SK-N-SH (cell line): ENCODE measurements at regions of chr10 and their contacts with region 1.

Region 1: DNA sequence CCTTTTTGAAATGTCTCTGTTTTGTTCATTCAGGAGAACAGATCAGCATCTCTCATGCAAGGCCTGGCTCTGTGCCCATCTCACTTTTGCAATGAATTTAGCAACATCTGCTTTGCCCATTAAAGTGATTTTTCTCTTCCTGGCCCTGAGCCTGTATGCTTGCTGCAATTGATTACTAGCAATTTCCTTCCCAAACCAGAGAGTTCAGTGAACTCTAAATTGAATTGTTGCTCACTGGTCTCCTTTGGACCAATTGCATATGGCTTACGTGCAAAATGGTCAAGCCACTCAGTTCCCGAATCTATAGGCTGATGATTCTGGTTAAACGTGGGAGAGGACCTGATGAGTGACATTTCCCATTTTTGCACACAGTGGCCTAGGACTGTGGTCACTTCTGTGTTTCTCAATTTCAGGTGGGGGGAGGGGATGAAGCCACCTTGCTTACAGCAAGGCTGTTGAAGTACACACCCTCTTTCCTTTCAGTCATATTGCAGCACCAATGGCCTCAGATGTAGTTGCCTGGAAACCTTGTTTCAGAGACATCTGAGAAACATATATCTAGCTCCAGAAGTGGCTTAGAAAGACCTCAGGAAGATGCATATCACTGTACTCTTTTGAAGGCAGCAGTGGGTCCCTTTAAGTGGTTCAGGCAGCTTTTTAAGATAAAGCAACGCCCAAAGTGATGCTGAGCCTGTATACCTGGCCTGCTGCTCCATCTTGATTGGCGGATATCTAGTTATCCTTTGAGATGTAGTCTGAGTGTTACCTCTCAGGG is 201.4 kb downstream of the PTEN start:
- DNase-seq: peak; percentile 60
- H3K4me3 ChIP-seq: no peak overlapping the region; a peak in 1 of 4 replicates
- H3K27ac ChIP-seq: peak overlapping the region in 1 of 2 experiments; percentile 98; a peak in 2 of 4 replicates
- H3K4me1 ChIP-seq: peaks cover 6 to 43% of the 10 kb centered on the region in 2 experiments; a peak in 3 of 4 replicates
- H3K27me3 ChIP-seq: no peaks in the 10 kb centered on the region
- CTCF ChIP-seq: no peak
- EP300 ChIP-seq: peak; percentile 18 to 99; a peak in 3 of 4 replicates
- RAD21 ChIP-seq: no peak; the same call in 1 of the 2 replicates

Region 2: DNA sequence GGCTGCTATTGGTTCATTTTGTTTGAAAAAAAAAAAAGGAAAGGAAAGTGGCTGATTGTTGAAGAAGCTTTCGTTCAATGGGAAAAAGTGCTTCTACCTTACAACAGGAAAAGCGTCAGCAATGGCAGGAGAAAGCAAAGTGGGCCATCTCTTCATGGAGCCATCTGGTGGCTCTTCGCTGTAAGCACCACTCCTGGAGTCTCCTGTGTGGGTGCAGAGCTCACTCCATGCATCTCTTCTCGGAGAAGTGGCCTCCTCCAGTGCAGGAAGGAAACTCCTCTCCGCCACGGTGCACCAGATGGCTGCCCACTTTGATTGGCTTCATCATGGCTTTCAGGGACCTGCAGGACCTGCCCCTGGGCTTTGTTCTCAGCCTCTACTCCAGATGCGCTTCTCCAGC is 49.6 kb after region 1 on chr10:
- CTCF ChIA-PET with region 1: interaction called, 11 read pairs
- POLR2A ChIA-PET with region 1: no interaction called
- DNase-seq: peak; percentile 36
- H3K4me3 ChIP-seq: no peak overlapping the region
- H3K27ac ChIP-seq: no peak overlapping the region
- H3K4me1 ChIP-seq: peaks cover 7 to 14% of the 10 kb centered on the region in 2 experiments; a peak in 3 of 4 replicates
- H3K27me3 ChIP-seq: no peaks in the 10 kb centered on the region
- CTCF ChIP-seq: peak; percentile 50
- EP300 ChIP-seq: no peak
- RAD21 ChIP-seq: peak; percentile 74